ENCODE measurements at regions of chrX and their contacts with region 1.

Region 1: GRCh38 chrX:82218361-82218760 is 1016.5 kb downstream of the SH3BGRL start:
- DNase-seq: peak in 2 of 9 experiments; percentile 34 to 43
- ATAC-seq: no peak
- H3K4me3 ChIP-seq: no peak overlapping the region
- H3K4me3 Mint-ChIP-seq: no peak overlapping the region
- H3K27ac ChIP-seq: no peak overlapping the region
- H3K27ac Mint-ChIP-seq: no peak overlapping the region
- H3K4me1 ChIP-seq: no peaks in the 10 kb centered on the region
- H3K4me1 Mint-ChIP-seq: peaks cover 2% of the 10 kb centered on the region
- H3K27me3 ChIP-seq: no peaks in the 10 kb centered on the region
- H3K27me3 Mint-ChIP-seq: no peaks in the 10 kb centered on the region
- CTCF ChIP-seq: no peak

Region 2: DNA sequence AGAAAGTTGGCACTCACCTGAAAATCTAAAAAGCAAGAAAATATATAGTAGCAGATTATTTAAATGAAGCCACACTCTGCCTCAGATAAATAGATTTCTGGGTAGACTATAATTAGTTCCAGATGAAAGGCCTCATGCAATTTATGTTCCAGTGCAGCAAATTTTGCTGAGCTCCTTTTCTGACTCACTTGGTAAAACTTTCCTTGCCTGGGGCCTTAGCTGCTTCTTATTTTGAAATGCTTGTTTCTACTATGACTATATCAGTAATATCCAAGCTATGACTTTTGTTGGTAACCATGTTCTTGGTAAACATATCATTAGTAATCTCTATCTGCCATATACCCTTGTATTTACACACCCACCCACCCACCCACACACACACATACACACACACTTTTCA is 54.7 kb before region 1 on chrX:
- CTCF ChIA-PET with region 1: no interaction called
- POLR2A ChIA-PET with region 1: no interaction called
- intact Hi-C with region 1: loop called in 1 of 2 experiments (anchors 2 kb)
- DNase-seq: no peak
- ATAC-seq: no peak
- H3K4me3 ChIP-seq: no peak overlapping the region
- H3K4me3 Mint-ChIP-seq: no peak overlapping the region
- H3K27ac ChIP-seq: no peak overlapping the region
- H3K27ac Mint-ChIP-seq: no peak overlapping the region
- H3K4me1 ChIP-seq: no peaks in the 10 kb centered on the region
- H3K4me1 Mint-ChIP-seq: no peaks in the 10 kb centered on the region
- H3K27me3 ChIP-seq: no peaks in the 10 kb centered on the region
- H3K27me3 Mint-ChIP-seq: no peaks in the 10 kb centered on the region
- CTCF ChIP-seq: no peak

Measured in CD8-positive, alpha-beta T cell (primary cell).